Naive thymus-derived CD4-positive, alpha-beta T cell (primary cell): ENCODE measurements at regions of chr16 and their contacts with region 1.

Region 1: GRCh38 chr16:13919683-13920509 is at the start of gene ERCC4:
- DNase-seq: peak; percentile 95 to 100 (median 99)
- ATAC-seq: peak; percentile 96
- H3K4me3 ChIP-seq: peak within 1 kb of the TSS; percentile 98
- H3K4me3 Mint-ChIP-seq: peak within 1 kb of the TSS; percentile 61 to 97 (median 92)
- H3K27ac ChIP-seq: peak within 1 kb of the TSS; percentile 85
- H3K27ac Mint-ChIP-seq: peak within 1 kb of the TSS; percentile 16 to 96 (median 93)
- H3K4me1 ChIP-seq: peaks cover 11 to 16% of the 10 kb centered on the region in 2 donors
- H3K4me1 Mint-ChIP-seq: peaks cover 18 to 30% (median 25%) of the 10 kb centered on the region in 7 donors
- H3K27me3 ChIP-seq: no peaks in the 10 kb centered on the region
- H3K27me3 Mint-ChIP-seq: peaks cover 0 to 7% (median 0%) of the 10 kb centered on the region in 5 donors
- total RNA-seq, gene ERCC4: 6.1 to 15.2 (median 13.4) TPM

Region 2: DNA sequence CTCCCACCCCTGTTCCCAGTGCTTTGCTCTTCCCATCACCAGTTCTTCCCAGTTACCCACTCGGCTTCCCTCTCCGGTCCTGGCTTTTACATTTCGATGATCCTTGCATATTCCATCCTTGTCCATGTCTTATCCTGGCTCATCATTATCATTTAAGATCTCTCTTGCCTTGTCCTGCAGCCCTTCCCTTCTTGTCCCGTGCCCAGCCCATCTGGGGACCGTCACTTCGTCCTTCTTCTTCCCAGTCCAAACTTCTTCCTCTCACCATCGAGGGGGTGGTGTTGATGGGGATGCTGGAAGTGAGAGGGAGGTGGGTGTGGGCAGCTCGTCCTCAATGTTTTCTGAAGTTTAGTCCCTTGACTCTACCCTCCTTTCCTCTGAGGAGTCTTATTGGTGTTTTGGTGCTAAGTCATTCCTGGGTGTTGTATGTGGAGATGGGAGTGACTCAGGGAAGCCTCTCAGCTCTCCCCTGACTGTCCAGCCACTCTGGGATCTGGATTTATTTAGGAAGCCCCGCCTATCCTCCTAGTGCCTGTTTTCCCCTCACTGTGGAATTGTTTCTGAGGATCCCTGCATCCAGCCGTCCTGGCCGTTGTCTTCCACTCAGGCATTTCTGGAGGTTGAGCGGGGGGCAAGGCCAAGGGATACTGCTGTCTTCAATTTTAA is 1942.4 kb before region 1 on chr16:
- CTCF ChIA-PET with region 1: no interaction called
- POLR2A ChIA-PET with region 1: no interaction called
- intact Hi-C with region 1: loop called in 1 of 2 experiments (anchors 1 kb)
- DNase-seq: no peak
- ATAC-seq: no peak
- H3K4me3 ChIP-seq: peak overlapping the region; percentile 71
- H3K4me3 Mint-ChIP-seq: peak overlapping the region; percentile 85 to 99 (median 94)
- H3K27ac ChIP-seq: peak overlapping the region; percentile 88
- H3K27ac Mint-ChIP-seq: peak overlapping the region; percentile 60 to 97 (median 93)
- H3K4me1 ChIP-seq: peaks cover 11 to 19% of the 10 kb centered on the region in 2 donors
- H3K4me1 Mint-ChIP-seq: peaks cover 33 to 55% (median 42%) of the 10 kb centered on the region in 7 donors
- H3K27me3 ChIP-seq: no peaks in the 10 kb centered on the region
- H3K27me3 Mint-ChIP-seq: no peaks in the 10 kb centered on the region

Region 3: GRCh38 chr16:13767215-13767614 is 152.7 kb before region 1 on chr16:
- CTCF ChIA-PET with region 1: no interaction called
- POLR2A ChIA-PET with region 1: no interaction called
- intact Hi-C with region 1: no loop called
- DNase-seq: no peak
- ATAC-seq: no peak
- H3K4me3 ChIP-seq: no peak overlapping the region
- H3K4me3 Mint-ChIP-seq: no peak overlapping the region
- H3K27ac ChIP-seq: no peak overlapping the region
- H3K27ac Mint-ChIP-seq: no peak overlapping the region
- H3K4me1 ChIP-seq: no peaks in the 10 kb centered on the region
- H3K4me1 Mint-ChIP-seq: no peaks in the 10 kb centered on the region
- H3K27me3 ChIP-seq: no peaks in the 10 kb centered on the region
- H3K27me3 Mint-ChIP-seq: peaks cover 0 to 22% (median 5%) of the 10 kb centered on the region in 5 donors

Region 4: DNA sequence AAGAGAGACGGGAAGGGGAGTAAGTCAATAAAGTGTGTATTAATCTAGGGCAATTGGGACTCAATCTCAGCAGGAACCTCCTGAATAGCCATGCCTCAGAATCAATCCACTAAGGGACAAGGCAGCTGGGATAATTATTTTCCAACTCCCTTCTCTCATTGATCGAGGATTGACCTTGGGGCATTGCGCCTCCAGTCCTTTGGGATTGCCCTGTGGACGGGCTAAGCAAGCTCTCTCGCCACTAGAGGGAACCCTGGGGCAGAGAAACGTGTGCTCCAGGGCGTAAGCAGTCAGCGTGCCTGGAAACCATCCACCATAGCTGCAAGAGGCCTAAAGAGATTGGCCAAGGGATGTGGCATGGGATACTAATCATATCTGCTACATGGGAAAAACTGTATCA is 53.8 kb before region 1 on chr16:
- CTCF ChIA-PET with region 1: interaction called, 4 read pairs
- POLR2A ChIA-PET with region 1: no interaction called
- intact Hi-C with region 1: loop called in 1 of 2 experiments (anchors 1 kb)
- DNase-seq: peak in 6 of 9 donors; percentile 2 to 31 (median 7)
- ATAC-seq: peak; percentile 56
- H3K4me3 ChIP-seq: no peak overlapping the region
- H3K4me3 Mint-ChIP-seq: no peak overlapping the region
- H3K27ac ChIP-seq: no peak overlapping the region
- H3K27ac Mint-ChIP-seq: no peak overlapping the region
- H3K4me1 ChIP-seq: no peaks in the 10 kb centered on the region
- H3K4me1 Mint-ChIP-seq: peaks cover 0 to 3% (median 0%) of the 10 kb centered on the region in 7 donors
- H3K27me3 ChIP-seq: no peaks in the 10 kb centered on the region
- H3K27me3 Mint-ChIP-seq: peaks cover 6 to 41% (median 26%) of the 10 kb centered on the region in 5 donors

Region 5: DNA sequence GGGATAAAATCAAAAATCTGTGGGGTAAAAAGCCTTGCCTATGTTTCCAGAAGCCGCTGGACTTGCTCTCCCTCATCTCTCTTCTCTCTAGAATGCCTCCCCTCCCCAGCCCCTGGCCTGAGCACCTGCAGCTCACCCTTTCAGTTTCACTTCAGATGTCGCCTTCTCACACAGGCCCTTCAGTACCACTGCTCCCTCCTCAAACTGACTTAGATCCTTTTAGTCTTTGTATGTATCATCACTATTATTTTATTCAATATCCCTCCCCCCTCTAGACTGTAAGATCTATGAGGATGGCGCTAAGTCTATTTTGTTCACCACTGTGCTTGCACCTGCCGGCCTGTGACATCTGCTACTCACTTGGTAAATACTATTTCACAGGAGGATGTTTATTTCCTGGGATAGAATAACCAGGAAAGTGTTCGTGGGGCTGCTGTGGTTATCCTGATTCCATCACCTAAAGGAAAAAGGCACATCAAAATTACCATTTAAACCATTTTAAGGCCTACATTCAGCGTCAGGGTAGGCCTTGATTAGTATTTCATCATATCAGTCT is 273.5 kb after region 1 on chr16:
- CTCF ChIA-PET with region 1: no interaction called
- POLR2A ChIA-PET with region 1: no interaction called
- intact Hi-C with region 1: loop called (anchors 5 to 10 kb)
- DNase-seq: peak in 8 of 9 donors; percentile 27 to 51 (median 34)
- ATAC-seq: peak; percentile 67
- H3K4me3 ChIP-seq: peak overlapping the region; percentile 14
- H3K4me3 Mint-ChIP-seq: peak overlapping the region; percentile 71 to 97 (median 84)
- H3K27ac ChIP-seq: peak overlapping the region; percentile 74
- H3K27ac Mint-ChIP-seq: peak overlapping the region; percentile 87 to 96 (median 90)
- H3K4me1 ChIP-seq: peaks cover 5 to 46% of the 10 kb centered on the region in 2 donors
- H3K4me1 Mint-ChIP-seq: peaks cover 23 to 78% (median 74%) of the 10 kb centered on the region in 7 donors
- H3K27me3 ChIP-seq: no peaks in the 10 kb centered on the region
- H3K27me3 Mint-ChIP-seq: no peaks in the 10 kb centered on the region

Region 6: GRCh38 chr16:14285513-14286385 is 365.9 kb after region 1 on chr16:
- CTCF ChIA-PET with region 1: interaction called, 3 read pairs
- POLR2A ChIA-PET with region 1: interaction called, 3 read pairs
- intact Hi-C with region 1: loop called (anchors 1 kb)
- DNase-seq: peak; percentile 89 to 99 (median 97)
- ATAC-seq: peak; percentile 90
- H3K4me3 ChIP-seq: peak overlapping the region; percentile 67
- H3K4me3 Mint-ChIP-seq: peak overlapping the region; percentile 84 to 96 (median 94)
- H3K27ac ChIP-seq: peak overlapping the region; percentile 69
- H3K27ac Mint-ChIP-seq: peak overlapping the region; percentile 85 to 97 (median 95)
- H3K4me1 ChIP-seq: peaks cover 0 to 3% of the 10 kb centered on the region in 2 donors
- H3K4me1 Mint-ChIP-seq: peaks cover 2 to 32% (median 19%) of the 10 kb centered on the region in 7 donors
- H3K27me3 ChIP-seq: no peaks in the 10 kb centered on the region
- H3K27me3 Mint-ChIP-seq: peaks cover 0 to 3% (median 0%) of the 10 kb centered on the region in 5 donors

Region 7: GRCh38 chr16:14529010-14529669 is 609.2 kb after region 1 on chr16:
- CTCF ChIA-PET with region 1: interaction called, 6 read pairs
- POLR2A ChIA-PET with region 1: no interaction called
- intact Hi-C with region 1: loop called (anchors 1 kb)
- DNase-seq: peak; percentile 15 to 72 (median 59)
- ATAC-seq: peak; percentile 73
- H3K4me3 ChIP-seq: no peak overlapping the region
- H3K4me3 Mint-ChIP-seq: no peak overlapping the region
- H3K27ac ChIP-seq: no peak overlapping the region
- H3K27ac Mint-ChIP-seq: peak overlapping the region in 1 of 9 donors; percentile 9
- H3K4me1 ChIP-seq: no peaks in the 10 kb centered on the region
- H3K4me1 Mint-ChIP-seq: peaks cover 0 to 12% (median 4%) of the 10 kb centered on the region in 7 donors
- H3K27me3 ChIP-seq: no peaks in the 10 kb centered on the region
- H3K27me3 Mint-ChIP-seq: no peaks in the 10 kb centered on the region

Region 8: GRCh38 chr16:14632692-14633569 is 713.0 kb after region 1 on chr16 and contains the start of gene BFAR:
- CTCF ChIA-PET with region 1: no interaction called
- POLR2A ChIA-PET with region 1: interaction called, 3 read pairs
- intact Hi-C with region 1: loop called (anchors 1 kb)
- DNase-seq: peak; percentile 95 to 99 (median 99)
- ATAC-seq: peak; percentile 85
- H3K4me3 ChIP-seq: peak within 1 kb of the TSS; percentile 89
- H3K4me3 Mint-ChIP-seq: peak within 1 kb of the TSS; percentile 92 to 100 (median 100)
- H3K27ac ChIP-seq: peak within 1 kb of the TSS; percentile 93
- H3K27ac Mint-ChIP-seq: peak within 1 kb of the TSS; percentile 94 to 100 (median 99)
- H3K4me1 ChIP-seq: peaks cover 38 to 45% of the 10 kb centered on the region in 2 donors
- H3K4me1 Mint-ChIP-seq: peaks cover 32 to 76% (median 68%) of the 10 kb centered on the region in 7 donors
- H3K27me3 ChIP-seq: no peaks in the 10 kb centered on the region
- H3K27me3 Mint-ChIP-seq: no peaks in the 10 kb centered on the region
- total RNA-seq, gene BFAR: 43.9 to 82.0 (median 66.0) TPM